Endothelial cell of umbilical vein (primary cell): ENCODE measurements at regions of chr22 and their contacts with region 1.

Region 1: DNA sequence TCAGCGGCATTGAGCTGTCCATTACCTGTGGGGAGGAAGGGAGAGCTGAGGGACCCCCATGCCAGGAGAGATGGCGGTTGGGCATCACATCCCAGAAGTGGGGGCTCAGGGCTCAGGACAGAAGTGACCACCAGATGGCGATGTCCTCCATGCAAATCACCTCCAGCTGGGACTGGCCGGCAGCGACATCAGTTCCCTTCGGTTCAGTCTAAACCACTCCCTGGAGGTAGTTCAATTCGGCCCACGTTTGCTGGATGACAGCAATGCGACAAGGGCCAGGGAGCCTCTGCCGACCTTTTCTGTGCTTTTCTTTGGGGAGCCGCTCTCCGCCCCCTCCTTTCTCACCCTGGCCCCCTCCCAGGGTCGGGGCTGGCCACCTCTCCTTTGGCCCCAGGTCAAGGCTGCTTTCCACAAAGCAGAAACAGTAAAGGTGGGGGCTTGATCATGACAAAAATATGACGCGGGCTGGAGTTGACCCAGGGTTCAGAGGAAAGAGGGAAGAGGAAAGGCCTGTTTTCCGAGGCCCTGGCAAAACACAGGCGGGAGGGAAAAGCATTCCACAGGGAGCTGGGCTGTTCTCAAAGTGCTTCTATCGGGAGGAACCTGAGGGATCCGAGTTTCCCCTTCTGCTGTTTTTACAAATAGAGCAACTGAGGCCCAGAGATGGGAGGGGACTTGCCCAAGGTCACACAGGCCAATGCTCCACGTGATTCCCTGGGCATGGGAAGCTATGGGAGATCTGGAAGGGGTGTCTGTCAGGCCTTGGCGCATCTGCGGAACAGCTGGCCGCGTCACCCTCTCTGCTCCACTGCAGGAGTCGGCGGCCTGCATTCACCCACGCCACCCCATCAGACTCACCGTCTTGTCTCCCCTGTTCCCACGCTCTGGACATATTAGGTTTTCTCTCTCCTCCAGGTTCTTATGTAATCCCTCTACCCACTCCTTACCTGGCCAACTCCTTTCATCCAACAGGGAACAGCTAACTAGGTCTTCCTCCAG is 54.7 kb downstream of the FBXO7 start:
- DNase-seq: peak; percentile 49
- H3K4me3 ChIP-seq: no peak overlapping the region
- H3K27ac ChIP-seq: no peak overlapping the region
- H3K4me1 ChIP-seq: peaks cover 3% of the 10 kb centered on the region
- H3K27me3 ChIP-seq: no peaks in the 10 kb centered on the region
- CTCF ChIP-seq: peak; percentile 79 to 89
- POLR2A ChIP-seq: no peak

Region 2: GRCh38 chr22:32411829-32412592 is 117.3 kb before region 1 on chr22 and contains the start of gene RTCB:
- CTCF ChIA-PET with region 1: no interaction called
- POLR2A ChIA-PET with region 1: no interaction called
- dilution Hi-C with region 1: no loop called
- intact Hi-C with region 1: no loop called
- DNase-seq: peak; percentile 94
- H3K4me3 ChIP-seq: peak within 1 kb of the TSS; percentile 98 to 100 (median 100)
- H3K27ac ChIP-seq: peak within 1 kb of the TSS; percentile 83
- H3K4me1 ChIP-seq: peaks cover 14% of the 10 kb centered on the region
- H3K27me3 ChIP-seq: peaks cover 0 to 2% of the 10 kb centered on the region in 2 experiments
- CTCF ChIP-seq: no peak
- POLR2A ChIP-seq: peak; percentile 64
- total RNA-seq, gene RTCB: 97.4 and 98.7 TPM in 2 replicates

Region 3: DNA sequence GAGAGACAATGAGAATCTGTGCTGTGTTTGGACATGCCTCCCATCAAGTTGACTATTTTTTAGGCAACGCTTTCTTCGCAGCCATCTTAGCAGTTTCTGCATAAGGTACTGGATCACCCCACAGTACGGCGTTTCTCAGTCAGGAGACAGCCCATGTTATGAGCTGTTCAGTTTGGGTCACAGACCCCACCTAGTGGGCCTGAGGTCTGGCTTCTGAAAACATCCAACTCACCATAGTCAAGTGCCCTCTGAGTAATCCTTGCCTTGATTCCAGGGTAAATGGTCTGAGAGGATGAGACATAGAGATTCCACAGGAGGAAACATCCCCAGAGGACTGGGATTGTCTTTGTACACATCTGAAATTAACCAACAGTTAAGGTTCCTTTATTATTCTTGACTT is 72.3 kb before region 1 on chr22:
- CTCF ChIA-PET with region 1: no interaction called
- POLR2A ChIA-PET with region 1: no interaction called
- dilution Hi-C with region 1: no loop called
- intact Hi-C with region 1: no loop called
- DNase-seq: no peak
- H3K4me3 ChIP-seq: no peak overlapping the region
- H3K27ac ChIP-seq: no peak overlapping the region
- H3K4me1 ChIP-seq: no peaks in the 10 kb centered on the region
- H3K27me3 ChIP-seq: peaks cover 3 to 7% of the 10 kb centered on the region in 2 experiments
- CTCF ChIP-seq: no peak
- POLR2A ChIP-seq: no peak

Region 4: GRCh38 chr22:32660292-32660691 is 131.0 kb after region 1 on chr22:
- CTCF ChIA-PET with region 1: interaction called, 3 read pairs
- POLR2A ChIA-PET with region 1: no interaction called
- dilution Hi-C with region 1: no loop called
- intact Hi-C with region 1: loop called (anchors 1 kb)
- DNase-seq: no peak
- H3K4me3 ChIP-seq: no peak overlapping the region
- H3K27ac ChIP-seq: no peak overlapping the region
- H3K4me1 ChIP-seq: no peaks in the 10 kb centered on the region
- H3K27me3 ChIP-seq: no peaks in the 10 kb centered on the region
- CTCF ChIP-seq: peak; percentile 28 to 32
- POLR2A ChIP-seq: no peak

Region 5: GRCh38 chr22:32823024-32823730 is 293.9 kb after region 1 on chr22:
- CTCF ChIA-PET with region 1: no interaction called
- POLR2A ChIA-PET with region 1: no interaction called
- dilution Hi-C with region 1: no loop called
- intact Hi-C with region 1: loop called (anchors 1 kb)
- DNase-seq: no peak
- H3K4me3 ChIP-seq: no peak overlapping the region
- H3K27ac ChIP-seq: no peak overlapping the region
- H3K4me1 ChIP-seq: no peaks in the 10 kb centered on the region
- H3K27me3 ChIP-seq: no peaks in the 10 kb centered on the region
- CTCF ChIP-seq: no peak
- POLR2A ChIP-seq: no peak

Region 6: DNA sequence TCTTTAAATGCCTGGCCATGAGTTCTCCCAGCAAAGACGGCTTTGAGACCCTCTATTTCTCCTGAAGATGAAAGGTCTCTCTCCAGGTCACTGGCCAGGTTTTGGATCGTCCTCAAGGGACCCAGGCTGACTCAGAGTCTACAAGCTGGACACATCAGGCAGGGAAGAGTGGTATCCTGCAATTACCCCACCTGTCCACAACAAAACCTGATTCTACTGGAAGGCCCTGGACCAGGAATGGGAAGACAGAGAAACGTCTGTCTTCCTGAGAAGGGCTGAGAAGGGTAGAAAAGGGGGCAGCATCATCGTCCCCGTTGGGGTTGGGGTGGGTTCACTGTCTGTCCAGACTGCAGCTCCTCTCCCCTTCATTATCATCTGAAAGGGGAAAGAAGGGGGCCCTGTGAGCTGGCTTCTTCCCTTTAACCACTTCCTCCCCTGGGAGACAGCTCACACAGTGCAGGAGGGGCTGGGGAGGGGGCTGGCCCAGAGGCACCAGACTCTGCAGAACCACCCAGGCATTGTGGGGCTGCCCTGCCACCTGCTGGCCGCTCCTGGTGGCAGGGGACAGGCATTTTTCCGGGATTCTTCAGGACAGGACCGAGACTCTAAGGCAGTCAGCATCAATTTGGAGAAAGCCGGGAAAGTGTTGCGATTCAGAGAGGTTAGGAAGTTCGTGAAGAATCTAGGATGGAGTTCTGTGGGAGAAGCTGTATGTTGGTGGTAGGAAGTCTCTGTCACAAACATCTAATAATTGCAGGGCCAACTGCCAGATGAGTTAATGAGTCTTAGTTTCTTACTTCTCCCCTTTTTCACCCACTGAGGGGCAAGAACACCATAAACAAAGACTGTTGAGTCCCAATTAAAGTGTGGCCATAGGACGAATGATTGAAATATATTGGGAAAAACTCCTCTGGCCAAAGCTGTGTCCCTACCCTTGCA is 471.3 kb after region 1 on chr22:
- CTCF ChIA-PET with region 1: interaction called, 6 read pairs
- POLR2A ChIA-PET with region 1: no interaction called
- dilution Hi-C with region 1: no loop called
- intact Hi-C with region 1: loop called (anchors 1 kb)
- DNase-seq: peak; percentile 2
- H3K4me3 ChIP-seq: no peak overlapping the region
- H3K27ac ChIP-seq: no peak overlapping the region
- H3K4me1 ChIP-seq: no peaks in the 10 kb centered on the region
- H3K27me3 ChIP-seq: no peaks in the 10 kb centered on the region
- CTCF ChIP-seq: peak; percentile 54 to 79
- POLR2A ChIP-seq: no peak